Transverse colon (tissue), 4 donors: ENCODE measurements at regions of chr14 and their contacts with region 1.

Region 1: DNA sequence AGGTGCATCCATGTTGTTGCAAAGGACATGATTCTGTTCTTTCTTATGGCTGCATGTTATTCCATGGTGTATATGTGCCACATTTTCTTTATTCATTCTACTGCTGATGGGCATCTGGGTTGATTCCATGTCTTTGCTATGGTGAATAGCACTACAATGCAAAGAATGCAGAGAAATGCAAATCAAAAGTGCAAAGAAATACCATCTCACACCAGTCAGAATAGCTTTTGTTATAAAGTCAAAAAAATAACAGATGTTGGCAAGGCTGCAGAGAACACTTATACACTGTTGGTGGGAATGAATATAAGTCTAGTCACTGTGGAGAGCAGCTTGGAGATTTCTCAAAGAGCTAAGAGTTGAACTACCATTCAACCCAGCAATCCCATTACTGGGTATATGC is 99.2 kb downstream of the DHRS2 start:
- DNase-seq: no peak
- H3K4me3 ChIP-seq: no peak overlapping the region
- H3K27ac ChIP-seq: no peak overlapping the region
- H3K4me1 ChIP-seq: no peaks in the 10 kb centered on the region
- H3K27me3 ChIP-seq: no peaks in the 10 kb centered on the region
- CTCF ChIP-seq: no peak
- EP300 ChIP-seq: no peak
- POLR2A ChIP-seq: no peak

Region 2: DNA sequence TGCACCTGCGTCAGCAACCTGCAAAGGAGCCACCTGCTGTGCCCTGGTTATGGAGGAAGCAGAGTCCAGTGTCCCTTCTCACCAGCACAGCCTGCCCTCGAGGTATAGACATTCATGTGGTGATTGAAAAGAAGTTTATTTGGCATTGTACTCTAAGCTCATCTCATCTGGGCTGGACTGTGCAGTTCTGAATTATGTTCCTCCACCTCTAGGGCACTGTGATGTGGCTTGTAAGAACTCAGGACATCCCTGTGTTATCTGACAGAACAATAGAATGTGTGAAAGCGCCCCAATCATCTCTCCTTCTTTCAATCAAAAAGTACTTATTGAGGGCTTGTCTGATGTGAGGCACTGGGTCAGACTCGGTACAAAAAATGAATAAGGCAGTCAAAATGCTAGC is 40.9 kb after region 1 on chr14:
- in situ Hi-C with region 1: no loop called
- intact Hi-C with region 1: loop called (anchors 2 kb)
- DNase-seq: no peak
- H3K4me3 ChIP-seq: no peak overlapping the region
- H3K27ac ChIP-seq: no peak overlapping the region
- H3K4me1 ChIP-seq: no peaks in the 10 kb centered on the region
- H3K27me3 ChIP-seq: no peaks in the 10 kb centered on the region
- CTCF ChIP-seq: no peak
- EP300 ChIP-seq: no peak
- POLR2A ChIP-seq: no peak